GM12878 (cell line): ENCODE measurements at regions of chr15 and their contacts with region 1.

Region 1: GRCh38 chr15:63881431-63881830 is 47.7 kb upstream of the HERC1 start:
- DNase-seq: peak; percentile 81
- ATAC-seq: peak; percentile 69
- H3K4me3 ChIP-seq: no peak overlapping the region
- H3K27ac ChIP-seq: peak overlapping the region; percentile 66
- H3K4me1 ChIP-seq: peaks cover 53% of the 10 kb centered on the region
- H3K27me3 ChIP-seq: no peaks in the 10 kb centered on the region
- CTCF ChIP-seq: 0 out of 6 replicates have a peak, but pooled peaks of 1 of the 3 experiments have one; percentile 7
- EP300 ChIP-seq: peak; percentile 16 to 51; a peak in 1 of 4 replicates
- POLR2A ChIP-seq: no peak
- RAD21 ChIP-seq: no peak

Region 2: DNA sequence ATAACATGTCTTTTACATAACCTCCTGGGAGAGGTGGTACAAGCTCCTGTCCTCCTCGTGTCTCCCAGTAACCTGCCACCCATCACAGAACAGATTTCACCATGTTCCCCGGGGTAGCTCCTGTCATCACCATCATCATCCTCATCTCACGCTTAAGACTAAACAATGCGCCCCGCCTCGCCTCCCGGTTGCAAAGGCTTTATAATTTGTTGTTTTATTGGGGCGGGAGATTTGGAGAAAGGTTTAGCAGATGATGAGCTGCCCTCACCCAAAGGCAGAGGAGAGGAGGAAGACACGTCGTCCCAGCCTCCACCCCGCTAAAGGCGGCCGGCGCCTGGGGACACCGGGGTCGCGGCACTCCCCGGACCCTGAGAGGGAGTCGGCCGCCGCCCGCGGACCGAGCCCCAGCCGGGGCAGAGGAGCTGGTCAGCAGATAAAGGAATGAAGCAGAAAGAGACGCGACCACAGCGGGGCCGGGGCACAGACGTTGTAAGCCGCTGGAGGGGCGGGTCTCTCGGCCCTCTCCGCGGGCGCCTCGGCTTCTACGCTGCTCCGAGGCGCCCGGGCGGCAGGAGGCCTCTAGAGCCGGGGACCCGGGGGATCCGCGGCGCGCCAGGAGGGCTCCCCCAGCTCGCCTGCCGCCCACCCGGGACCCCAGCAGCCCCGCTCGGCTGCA is 48.3 kb before region 1 on chr15:
- CTCF ChIA-PET with region 1: interaction called, 12 read pairs
- POLR2A ChIA-PET with region 1: interaction called, 17 read pairs
- RAD21 ChIA-PET with region 1: interaction called, 10 read pairs
- SMC1A ChIA-PET with region 1: interaction called, 21 read pairs
- in situ Hi-C with region 1: no loop called
- intact Hi-C with region 1: no loop called
- DNase-seq: no peak
- ATAC-seq: peak; percentile 68
- H3K4me3 ChIP-seq: peak overlapping the region; percentile 99
- H3K27ac ChIP-seq: peak overlapping the region; percentile 99
- H3K4me1 ChIP-seq: peaks cover 10% of the 10 kb centered on the region
- H3K27me3 ChIP-seq: no peaks in the 10 kb centered on the region
- CTCF ChIP-seq: no peak
- EP300 ChIP-seq: no peak
- POLR2A ChIP-seq: no peak
- RAD21 ChIP-seq: no peak

Region 3: GRCh38 chr15:63896336-63897115 is 15.1 kb after region 1 on chr15:
- CTCF ChIA-PET with region 1: interaction called, 35 read pairs
- POLR2A ChIA-PET with region 1: interaction called, 15 read pairs
- RAD21 ChIA-PET with region 1: interaction called, 77 read pairs
- SMC1A ChIA-PET with region 1: interaction called, 143 read pairs
- in situ Hi-C with region 1: no loop called
- intact Hi-C with region 1: no loop called
- DNase-seq: peak; percentile 90
- ATAC-seq: peak; percentile 84
- H3K4me3 ChIP-seq: no peak overlapping the region
- H3K27ac ChIP-seq: peak overlapping the region; percentile 84
- H3K4me1 ChIP-seq: peaks cover 59% of the 10 kb centered on the region
- H3K27me3 ChIP-seq: no peaks in the 10 kb centered on the region
- CTCF ChIP-seq: no peak
- EP300 ChIP-seq: peak; percentile 93 to 95
- POLR2A ChIP-seq: no peak
- RAD21 ChIP-seq: no peak